ENCODE measurements at regions of chr1 and their contacts with region 1.

Region 1: GRCh38 chr1:9249534-9250410 is 15.2 kb downstream of the H6PD start:
- DNase-seq: no peak

Region 2: DNA sequence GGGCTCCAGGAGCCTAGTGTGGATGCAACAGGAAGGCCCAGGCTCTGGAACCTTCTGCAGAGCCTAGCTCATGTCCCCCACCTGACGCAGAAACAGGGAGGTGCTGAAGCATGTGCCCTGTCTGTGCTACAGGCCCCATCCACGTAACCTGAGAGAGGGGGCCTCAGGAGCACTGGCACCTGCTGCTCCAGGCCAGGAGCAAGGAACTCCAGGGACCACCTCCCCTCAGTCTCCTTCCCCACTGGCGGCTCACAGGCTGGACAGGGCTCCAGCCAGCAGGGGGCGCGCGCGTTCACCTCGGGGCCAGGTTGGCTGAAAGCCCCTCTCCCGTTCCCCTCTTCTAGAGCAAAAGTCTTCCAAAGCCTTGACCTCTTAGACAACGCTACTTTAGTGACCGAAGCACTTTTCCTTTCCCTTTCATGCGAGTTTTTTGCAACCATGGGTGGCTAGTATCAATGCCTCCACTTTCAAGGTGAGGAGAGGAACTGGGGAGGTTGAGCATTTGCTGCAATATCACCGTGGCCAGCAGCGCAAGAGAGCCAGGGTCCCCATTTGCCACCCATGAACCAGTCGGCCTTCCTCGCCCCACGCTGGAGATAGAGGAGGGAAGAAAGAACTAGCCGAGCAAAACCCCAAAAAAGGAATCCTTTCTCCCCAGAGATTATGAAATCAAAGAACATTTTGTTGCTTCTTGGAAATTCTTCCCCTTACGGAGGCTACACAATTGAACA is 68.4 kb before region 1 on chr1:
- intact Hi-C with region 1: loop called (anchors 5 kb)
- DNase-seq: peak; percentile 92

Measured in cardiac septum (tissue), 1 donor.